HCT116 (cell line): ENCODE measurements at regions of chr6 and their contacts with region 1.

Region 1: GRCh38 chr6:17865798-17866725 is 121.4 kb downstream of the KIF13A start:
- DNase-seq: peak; percentile 98
- ATAC-seq: peak; percentile 87
- H3K4me3 ChIP-seq: peak overlapping the region in 1 of 2 experiments; percentile 24; a peak in 2 of 4 replicates
- H3K27ac ChIP-seq: peak overlapping the region; percentile 85
- H3K4me1 ChIP-seq: peaks cover 40 to 52% of the 10 kb centered on the region in 2 experiments
- H3K27me3 ChIP-seq: no peaks in the 10 kb centered on the region
- CTCF ChIP-seq: no peak
- POLR2A ChIP-seq: no peak
- RAD21 ChIP-seq: peak; percentile 30; the same call in 1 of the 2 replicates

Region 2: DNA sequence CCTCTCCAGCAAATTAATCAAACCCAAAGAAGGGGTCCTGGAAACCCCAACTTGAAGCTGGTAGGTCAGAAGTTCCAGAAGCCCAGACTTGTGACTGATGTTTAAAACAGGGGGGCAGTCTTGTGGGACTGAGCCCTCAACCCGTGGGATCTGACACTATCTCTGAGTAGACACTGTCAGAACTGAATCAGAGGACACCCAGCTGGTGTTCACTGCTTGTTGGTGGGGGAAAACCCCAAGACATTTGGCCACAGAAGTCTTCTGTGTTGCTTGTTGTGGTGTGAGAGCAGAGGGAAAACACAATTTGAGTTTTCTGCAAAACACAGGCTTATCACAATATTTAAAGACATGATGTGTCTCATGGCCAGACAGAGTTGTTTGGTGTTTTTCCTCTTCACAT is 91.4 kb after region 1 on chr6:
- CTCF ChIA-PET with region 1: no interaction called
- POLR2A ChIA-PET with region 1: no interaction called
- RAD21 ChIA-PET with region 1: no interaction called
- intact Hi-C with region 1: no loop called
- DNase-seq: no peak
- ATAC-seq: no peak
- H3K4me3 ChIP-seq: no peak overlapping the region
- H3K27ac ChIP-seq: no peak overlapping the region
- H3K4me1 ChIP-seq: no peaks in the 10 kb centered on the region
- H3K27me3 ChIP-seq: no peaks in the 10 kb centered on the region
- CTCF ChIP-seq: no peak
- POLR2A ChIP-seq: no peak
- RAD21 ChIP-seq: no peak

Region 3: DNA sequence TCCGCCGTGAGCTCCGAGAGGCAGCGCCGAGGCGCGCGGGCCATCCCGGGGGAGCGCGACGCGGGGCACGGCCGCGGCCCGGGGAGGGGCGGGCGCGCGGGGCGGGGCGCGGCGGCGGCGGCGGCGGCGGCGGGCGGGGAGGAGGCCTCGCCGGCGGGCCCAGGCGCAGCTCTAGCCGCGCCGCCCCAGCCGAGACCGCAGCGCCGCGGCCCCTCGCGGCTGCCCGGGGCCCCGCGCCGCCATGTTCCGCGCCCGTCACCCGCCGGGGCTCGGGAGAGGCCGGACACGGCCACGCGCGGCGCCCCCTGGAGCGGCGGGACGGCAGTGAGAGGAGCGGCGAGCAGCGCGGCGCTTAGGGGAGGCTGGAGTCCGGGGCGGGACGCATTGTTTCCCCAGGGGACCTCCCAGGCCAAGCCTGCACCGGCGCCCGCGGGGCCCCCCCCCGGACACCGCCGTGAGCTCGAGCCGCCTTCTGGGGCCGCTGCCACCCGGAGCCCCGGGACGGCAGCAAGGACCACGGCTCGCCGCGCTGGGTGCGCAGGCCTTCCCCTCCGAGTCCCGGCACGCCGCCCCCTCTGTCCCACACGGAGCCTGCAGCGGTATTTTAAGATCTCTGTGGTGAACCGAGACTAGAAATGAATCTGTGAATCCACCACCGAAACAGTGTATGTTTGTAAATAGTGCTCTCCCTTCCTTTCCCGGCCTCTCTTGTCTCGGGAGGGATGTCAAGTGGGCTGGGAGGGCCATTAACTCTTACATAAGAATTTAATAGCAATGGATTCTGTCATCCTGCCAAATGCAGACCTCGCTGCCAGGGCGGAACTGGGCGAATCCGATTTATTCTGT is 121.7 kb after region 1 on chr6 and contains the start of gene KIF13A:
- CTCF ChIA-PET with region 1: no interaction called
- POLR2A ChIA-PET with region 1: no interaction called
- RAD21 ChIA-PET with region 1: no interaction called
- intact Hi-C with region 1: loop called (anchors 5 kb)
- DNase-seq: no peak
- ATAC-seq: peak; percentile 81
- H3K4me3 ChIP-seq: peak within 1 kb of the TSS; percentile 64 to 75
- H3K27ac ChIP-seq: peak within 1 kb of the TSS; percentile 86
- H3K4me1 ChIP-seq: peaks cover 8 to 28% of the 10 kb centered on the region in 2 experiments
- H3K27me3 ChIP-seq: no peaks in the 10 kb centered on the region
- CTCF ChIP-seq: no peak
- POLR2A ChIP-seq: peak; percentile 31
- RAD21 ChIP-seq: no peak
- total RNA-seq, gene KIF13A: 23.1 TPM

Region 4: DNA sequence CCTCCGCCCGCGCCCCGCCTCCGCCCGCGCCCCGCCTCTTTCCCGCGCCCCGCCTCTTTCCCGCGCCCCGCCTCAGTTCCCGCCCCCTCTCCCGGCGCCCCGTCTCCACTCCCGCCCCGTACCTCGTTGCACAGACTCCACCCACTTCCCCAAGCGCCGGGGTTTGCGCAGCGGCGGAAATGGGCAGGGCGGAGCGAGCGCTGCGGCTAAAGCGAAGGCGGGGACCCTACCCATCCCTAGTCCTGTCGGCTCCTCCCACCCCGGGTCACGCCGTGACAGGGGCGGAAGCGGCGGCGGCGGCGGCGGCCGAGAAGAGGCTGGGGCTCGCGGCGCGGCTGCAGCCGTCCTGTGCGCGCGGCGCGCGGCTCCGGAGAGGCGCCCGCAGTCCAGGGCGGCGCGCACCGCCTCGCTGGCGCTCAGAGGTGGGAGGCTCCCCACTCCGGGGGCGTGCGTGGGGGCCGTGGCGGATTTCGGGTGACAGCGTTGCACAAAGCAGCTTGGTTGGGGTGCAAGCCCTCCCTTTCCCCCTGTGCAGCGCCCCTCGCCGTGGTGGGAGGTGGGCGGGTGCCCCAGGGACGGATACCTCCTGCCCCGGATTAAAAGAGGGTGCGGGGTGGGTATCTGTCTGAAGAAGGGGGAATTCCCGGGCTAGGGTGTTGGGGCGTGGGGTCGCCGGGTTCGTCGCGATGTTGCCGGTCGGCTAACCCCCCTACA is 289.2 kb after region 1 on chr6 and contains the start of gene KDM1B:
- CTCF ChIA-PET with region 1: no interaction called
- POLR2A ChIA-PET with region 1: no interaction called
- RAD21 ChIA-PET with region 1: no interaction called
- intact Hi-C with region 1: loop called (anchors 2 kb)
- DNase-seq: peak; percentile 94
- ATAC-seq: peak; percentile 95
- H3K4me3 ChIP-seq: peak within 1 kb of the TSS; percentile 86 to 90
- H3K27ac ChIP-seq: peak within 1 kb of the TSS; percentile 69
- H3K4me1 ChIP-seq: peaks cover 7% of the 10 kb centered on the region in 2 experiments; a peak in 3 of 4 replicates
- H3K27me3 ChIP-seq: no peaks in the 10 kb centered on the region
- CTCF ChIP-seq: no peak
- POLR2A ChIP-seq: no peak
- RAD21 ChIP-seq: no peak
- total RNA-seq, gene KDM1B: 24.5 TPM

Region 5: DNA sequence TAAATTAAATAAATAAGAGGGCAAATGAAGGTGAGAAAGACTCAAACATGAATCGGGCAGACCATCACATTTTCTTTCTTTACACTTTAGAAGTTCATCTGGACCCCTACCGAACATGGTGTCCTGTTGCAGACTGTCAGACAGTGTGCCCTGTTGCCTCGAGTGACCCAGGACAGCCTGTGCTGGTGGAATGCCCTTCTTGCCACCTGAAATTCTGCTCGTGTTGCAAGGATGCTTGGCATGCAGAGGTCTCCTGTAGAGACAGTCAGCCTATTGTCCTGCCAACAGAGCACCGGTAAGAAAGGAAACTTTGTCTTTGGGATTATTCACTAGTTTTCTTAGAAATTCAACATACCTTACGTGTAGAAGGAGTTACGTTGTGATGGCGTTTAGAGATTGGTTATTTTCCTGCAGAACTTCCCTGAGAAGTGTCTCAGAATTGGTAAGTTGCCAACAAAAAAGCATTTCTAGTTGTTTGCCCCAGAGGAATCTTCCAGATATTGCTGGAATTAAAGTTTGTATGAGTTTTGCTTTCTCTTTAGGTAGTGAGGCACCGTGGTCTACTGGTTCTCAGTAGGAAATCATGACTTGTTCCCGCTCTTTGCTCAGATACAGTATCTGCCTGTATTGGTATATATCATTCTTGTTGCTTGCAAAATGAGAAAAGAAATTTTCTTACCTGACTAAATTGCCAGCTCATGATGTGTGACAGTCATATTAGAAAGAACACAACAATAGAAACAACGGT is 591.2 kb after region 1 on chr6:
- CTCF ChIA-PET with region 1: no interaction called
- POLR2A ChIA-PET with region 1: no interaction called
- RAD21 ChIA-PET with region 1: no interaction called
- intact Hi-C with region 1: no loop called
- DNase-seq: no peak
- ATAC-seq: no peak
- H3K4me3 ChIP-seq: no peak overlapping the region
- H3K27ac ChIP-seq: no peak overlapping the region
- H3K4me1 ChIP-seq: no peaks in the 10 kb centered on the region
- H3K27me3 ChIP-seq: no peaks in the 10 kb centered on the region
- CTCF ChIP-seq: no peak
- POLR2A ChIP-seq: no peak
- RAD21 ChIP-seq: no peak